ENCODE measurements at regions of chr18 and their contacts with region 1.

Region 1: GRCh38 chr18:7017013-7017412 is 100.6 kb downstream of the LAMA1 start:
- DNase-seq: peak; percentile 40
- H3K4me3 ChIP-seq: no peak overlapping the region
- H3K27ac ChIP-seq: no peak overlapping the region
- H3K4me1 ChIP-seq: no peaks in the 10 kb centered on the region
- H3K27me3 ChIP-seq: no peaks in the 10 kb centered on the region
- CTCF ChIP-seq: no peak

Region 2: GRCh38 chr18:6004683-6005082 is 1012.3 kb before region 1 on chr18:
- CTCF ChIA-PET with region 1: no interaction called
- dilution Hi-C with region 1: no loop called
- in situ Hi-C with region 1: no loop called
- intact Hi-C with region 1: no loop called
- DNase-seq: no peak
- H3K4me3 ChIP-seq: no peak overlapping the region
- H3K27ac ChIP-seq: no peak overlapping the region
- H3K4me1 ChIP-seq: no peaks in the 10 kb centered on the region
- H3K27me3 ChIP-seq: no peaks in the 10 kb centered on the region
- CTCF ChIP-seq: no peak

Region 3: DNA sequence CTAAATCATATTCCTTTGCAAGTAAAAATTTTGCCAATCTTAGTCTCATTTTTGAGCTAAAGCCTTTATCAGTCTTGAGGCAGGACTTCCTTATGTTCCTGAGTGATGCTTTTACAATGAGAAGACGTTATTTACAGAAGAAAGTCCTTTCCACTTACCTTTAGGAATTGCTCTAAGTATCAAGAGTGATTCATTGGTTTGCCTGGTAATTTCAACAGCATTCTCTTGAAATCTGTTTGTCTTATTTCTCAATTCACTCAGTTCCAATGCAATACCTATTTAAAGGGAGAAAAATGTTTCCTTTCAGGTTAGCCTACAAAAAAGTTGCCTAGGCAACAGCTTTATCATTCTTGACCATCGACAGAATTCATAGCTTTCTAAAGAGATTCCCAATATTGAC is 36.6 kb before region 1 on chr18:
- CTCF ChIA-PET with region 1: no interaction called
- dilution Hi-C with region 1: no loop called
- in situ Hi-C with region 1: no loop called
- intact Hi-C with region 1: loop called (anchors 1 kb)
- DNase-seq: no peak
- H3K4me3 ChIP-seq: no peak overlapping the region
- H3K27ac ChIP-seq: no peak overlapping the region
- H3K4me1 ChIP-seq: no peaks in the 10 kb centered on the region
- H3K27me3 ChIP-seq: no peaks in the 10 kb centered on the region
- CTCF ChIP-seq: no peak

Region 4: DNA sequence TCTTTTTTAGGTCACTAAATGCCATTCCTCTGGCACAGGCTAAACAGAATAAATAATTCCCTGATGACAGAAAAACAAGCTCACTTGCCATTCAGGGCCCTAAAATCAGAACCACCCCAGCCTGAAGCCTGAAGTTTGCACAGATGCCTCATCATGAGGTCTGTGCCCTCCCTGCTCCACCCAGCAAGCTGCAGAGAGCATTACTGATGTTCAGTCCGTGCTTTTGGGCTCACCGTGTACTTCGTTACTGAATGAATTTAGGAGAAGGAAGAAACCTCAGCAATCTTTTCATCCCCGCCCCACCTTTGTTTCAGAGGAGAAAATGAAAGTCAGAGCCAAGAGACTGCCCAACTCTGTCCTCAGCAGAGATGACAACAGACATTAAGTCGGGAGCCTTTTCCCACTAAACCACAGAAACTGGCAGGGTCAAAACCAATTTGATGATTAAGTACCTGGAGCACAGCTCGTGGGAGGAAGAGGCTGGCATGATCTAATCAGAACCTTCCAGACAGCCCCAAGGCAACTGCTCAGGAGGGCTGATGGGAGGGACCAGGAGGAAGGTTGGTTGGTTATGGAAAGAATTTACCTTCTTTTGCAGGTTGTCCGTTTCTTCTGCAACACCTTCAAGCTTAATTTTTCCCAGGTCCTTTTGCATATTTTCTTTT is 22.1 kb before region 1 on chr18:
- CTCF ChIA-PET with region 1: no interaction called
- dilution Hi-C with region 1: no loop called
- in situ Hi-C with region 1: no loop called
- intact Hi-C with region 1: no loop called
- DNase-seq: peak; percentile 99
- H3K4me3 ChIP-seq: peak overlapping the region in 2 of 3 experiments; percentile 0 to 30
- H3K27ac ChIP-seq: peak overlapping the region; percentile 93
- H3K4me1 ChIP-seq: peaks cover 18% of the 10 kb centered on the region
- H3K27me3 ChIP-seq: no peaks in the 10 kb centered on the region
- CTCF ChIP-seq: no peak

Measured in mammary epithelial cell (primary cell).